Calu3 (cell line): ENCODE measurements at regions of chr18 and their contacts with region 1.

Region 1: DNA sequence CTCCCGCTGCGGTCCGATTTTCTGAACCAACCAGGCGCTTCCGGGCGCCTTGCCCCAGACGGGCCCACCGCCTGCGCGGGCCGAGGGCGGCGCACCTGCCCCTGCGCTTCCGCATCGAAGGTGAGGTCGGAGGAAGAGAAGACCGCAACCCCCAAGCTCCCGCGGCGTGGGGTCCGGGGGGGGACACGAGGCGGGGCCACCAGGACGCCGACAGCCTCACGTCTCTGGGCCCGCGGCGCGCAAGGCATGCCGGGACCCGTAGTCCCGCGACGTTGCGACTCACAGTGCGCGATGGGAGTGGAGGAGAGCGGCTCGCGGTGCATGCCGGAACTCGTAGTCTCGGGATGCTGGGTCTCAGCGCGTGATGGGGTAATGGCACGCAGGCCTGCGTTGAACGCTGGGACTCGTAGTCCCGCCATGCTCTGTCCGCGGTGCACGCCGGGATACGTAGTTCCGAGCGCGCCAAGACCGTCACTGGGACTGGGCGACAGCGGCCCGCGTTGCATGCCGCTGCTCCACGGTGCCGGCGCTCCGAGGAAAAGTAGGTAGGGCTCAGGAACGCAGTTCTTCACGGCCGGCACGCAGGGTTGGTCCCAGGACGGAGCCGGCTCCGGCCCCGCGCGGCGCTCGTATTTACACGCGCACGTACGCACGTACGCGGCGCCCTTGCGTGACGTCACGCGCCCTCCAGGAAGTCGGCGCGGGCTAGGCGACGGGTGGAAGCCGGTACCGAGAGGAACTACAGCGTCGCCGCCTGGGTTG is at the start of gene CTDP1:
- DNase-seq: peak; percentile 94
- H3K4me3 Mint-ChIP-seq: peak within 1 kb of the TSS; percentile 77
- H3K27ac Mint-ChIP-seq: peak within 1 kb of the TSS; percentile 82
- H3K4me1 Mint-ChIP-seq: no peaks in the 10 kb centered on the region
- H3K27me3 Mint-ChIP-seq: no peaks in the 10 kb centered on the region
- CTCF ChIP-seq: no peak
- total RNA-seq, gene CTDP1: 13.9 and 15.6 TPM in 2 replicates

Region 2: GRCh38 chr18:79393635-79394533 is 285.4 kb before region 1 on chr18:
- CTCF ChIA-PET with region 1: interaction called, 12 read pairs
- intact Hi-C with region 1: no loop called
- DNase-seq: peak; percentile 78
- H3K4me3 Mint-ChIP-seq: peak overlapping the region; percentile 79
- H3K27ac Mint-ChIP-seq: peak overlapping the region; percentile 97
- H3K4me1 Mint-ChIP-seq: no peaks in the 10 kb centered on the region
- H3K27me3 Mint-ChIP-seq: peaks cover 16% of the 10 kb centered on the region
- CTCF ChIP-seq: no peak

Region 3: DNA sequence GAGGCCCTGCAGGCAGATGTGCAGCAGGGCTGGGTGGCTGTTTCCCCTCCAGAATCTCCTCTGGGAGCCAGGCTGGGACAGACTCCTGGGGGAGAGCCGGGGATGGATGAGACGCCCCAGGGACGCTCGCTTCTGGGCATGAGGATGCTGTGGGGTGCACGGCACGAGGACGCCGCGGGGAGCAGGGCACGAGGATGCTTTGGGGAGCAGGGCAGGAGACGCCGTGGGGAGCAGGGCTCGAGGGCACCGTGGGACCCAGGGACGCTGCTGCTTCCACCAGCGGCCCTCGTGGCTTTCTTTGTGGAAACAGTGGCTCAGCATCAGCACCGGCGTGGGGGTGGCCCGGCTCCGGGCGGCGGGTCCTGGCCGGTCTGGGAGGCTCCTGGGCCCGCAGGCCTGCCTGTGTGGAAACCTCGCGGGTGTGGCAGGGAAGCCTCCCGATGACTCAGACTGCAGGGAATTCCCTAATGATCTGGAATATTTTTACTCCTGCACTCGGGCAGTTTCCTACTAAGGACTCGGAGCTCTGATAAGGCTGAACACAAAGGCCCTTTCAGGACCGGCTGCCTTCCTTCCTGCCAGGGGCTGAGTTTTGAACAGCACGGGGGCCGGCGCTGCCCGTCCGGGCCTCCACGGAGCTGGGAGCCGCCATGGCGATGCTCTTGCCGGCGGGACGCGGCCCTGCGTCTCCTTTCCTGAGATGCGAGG is 221.0 kb before region 1 on chr18:
- CTCF ChIA-PET with region 1: no interaction called
- intact Hi-C with region 1: no loop called
- DNase-seq: peak; percentile 69
- H3K4me3 Mint-ChIP-seq: peak overlapping the region; percentile 44
- H3K27ac Mint-ChIP-seq: peak overlapping the region; percentile 58
- H3K4me1 Mint-ChIP-seq: peaks cover 6% of the 10 kb centered on the region
- H3K27me3 Mint-ChIP-seq: no peaks in the 10 kb centered on the region
- CTCF ChIP-seq: no peak

Region 4: DNA sequence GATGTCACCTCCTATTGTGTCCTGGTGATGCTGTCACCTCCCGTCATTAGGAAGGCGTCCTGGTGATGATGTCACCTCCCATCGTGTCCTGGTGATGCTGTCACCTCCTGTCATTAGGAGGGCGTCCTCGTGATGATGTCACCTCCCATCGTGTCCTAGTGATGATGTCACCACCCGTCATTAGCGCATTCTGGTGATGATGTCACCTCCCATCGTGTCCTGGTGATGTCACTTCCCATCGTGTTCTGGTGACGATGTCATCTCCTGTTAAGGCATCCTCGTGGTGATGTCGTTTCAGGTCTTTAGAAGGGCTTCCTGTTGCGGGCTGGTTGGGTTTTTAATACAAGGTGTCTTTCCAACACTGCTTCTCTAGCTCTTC is 41.1 kb after region 1 on chr18:
- CTCF ChIA-PET with region 1: no interaction called
- intact Hi-C with region 1: no loop called
- DNase-seq: no peak
- H3K4me3 Mint-ChIP-seq: no peak overlapping the region
- H3K27ac Mint-ChIP-seq: no peak overlapping the region
- H3K4me1 Mint-ChIP-seq: no peaks in the 10 kb centered on the region
- H3K27me3 Mint-ChIP-seq: no peaks in the 10 kb centered on the region
- CTCF ChIP-seq: no peak

Region 5: DNA sequence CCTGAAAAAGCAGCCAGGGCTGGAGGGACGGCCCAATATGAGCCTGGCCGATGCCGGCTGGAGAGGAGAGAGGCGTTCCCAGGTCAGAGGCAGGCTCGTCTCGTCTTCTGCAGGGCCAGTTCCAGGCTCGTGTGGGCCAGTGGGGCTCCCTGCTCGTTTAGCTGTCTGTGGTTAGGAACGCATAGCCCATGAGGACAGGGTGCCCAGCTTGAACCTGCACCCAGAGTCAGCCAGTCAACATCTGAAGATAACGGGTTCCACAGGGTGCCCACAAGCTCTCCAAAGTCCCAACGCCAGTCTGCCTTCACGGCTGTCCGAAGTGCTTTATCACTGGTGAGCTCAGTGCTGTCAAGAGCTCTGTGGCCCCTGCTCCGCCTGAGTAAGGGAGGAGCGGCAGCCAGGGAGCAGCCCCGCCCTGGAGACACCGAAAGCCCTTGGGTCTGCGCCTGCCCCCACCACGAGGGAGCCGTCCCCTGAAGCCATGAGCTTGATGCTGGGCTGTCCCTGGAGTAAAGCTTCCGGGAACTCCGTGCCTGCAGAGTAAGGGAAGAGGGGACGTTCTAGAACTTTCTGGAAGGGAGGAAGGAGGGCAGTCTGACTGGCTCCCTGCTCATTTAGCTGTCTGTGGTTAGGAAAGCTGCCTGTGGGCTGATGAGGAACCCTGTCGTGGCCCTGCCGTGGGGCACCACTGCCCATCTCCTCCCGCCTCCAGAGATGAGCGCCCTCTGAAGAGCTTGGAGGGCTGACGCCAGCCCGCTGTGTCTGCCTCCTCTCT is 282.4 kb after region 1 on chr18:
- CTCF ChIA-PET with region 1: no interaction called
- intact Hi-C with region 1: loop called (anchors 2 kb)
- DNase-seq: no peak
- H3K4me3 Mint-ChIP-seq: peak overlapping the region; percentile 69
- H3K27ac Mint-ChIP-seq: no peak overlapping the region
- H3K4me1 Mint-ChIP-seq: peaks cover 24% of the 10 kb centered on the region
- H3K27me3 Mint-ChIP-seq: no peaks in the 10 kb centered on the region
- CTCF ChIP-seq: no peak